Calu3 (cell line): ENCODE measurements at regions of chr6 and their contacts with region 1.

Region 1: DNA sequence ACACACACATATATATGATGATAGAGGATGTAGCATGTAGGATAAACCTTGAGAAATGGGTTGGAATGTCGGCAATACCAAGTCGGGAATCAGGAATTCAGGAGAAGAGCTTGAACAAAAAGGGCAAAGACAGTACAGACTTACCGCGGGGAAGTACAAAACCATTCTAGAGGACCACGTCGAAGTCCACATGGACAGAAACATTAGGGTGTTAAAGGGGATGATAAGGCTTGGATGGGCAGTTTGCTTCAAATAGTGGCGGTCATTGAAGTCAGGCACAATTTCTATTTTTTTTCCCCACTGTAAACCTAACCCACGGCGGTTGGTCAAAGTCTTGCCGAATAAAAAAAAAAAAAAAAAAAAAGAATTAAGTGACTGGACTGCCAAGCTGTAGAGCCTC is 766 bp upstream of the NUS1 start:
- DNase-seq: no peak
- H3K4me3 Mint-ChIP-seq: peak overlapping the region; percentile 84
- H3K27ac Mint-ChIP-seq: peak overlapping the region; percentile 36
- H3K4me1 Mint-ChIP-seq: peaks cover 36% of the 10 kb centered on the region
- H3K27me3 Mint-ChIP-seq: no peaks in the 10 kb centered on the region
- CTCF ChIP-seq: no peak

Region 2: GRCh38 chr6:117557951-117558350 is 116.6 kb before region 1 on chr6:
- CTCF ChIA-PET with region 1: no interaction called
- intact Hi-C with region 1: no loop called
- DNase-seq: no peak
- H3K4me3 Mint-ChIP-seq: no peak overlapping the region
- H3K27ac Mint-ChIP-seq: no peak overlapping the region
- H3K4me1 Mint-ChIP-seq: no peaks in the 10 kb centered on the region
- H3K27me3 Mint-ChIP-seq: no peaks in the 10 kb centered on the region
- CTCF ChIP-seq: no peak

Region 3: DNA sequence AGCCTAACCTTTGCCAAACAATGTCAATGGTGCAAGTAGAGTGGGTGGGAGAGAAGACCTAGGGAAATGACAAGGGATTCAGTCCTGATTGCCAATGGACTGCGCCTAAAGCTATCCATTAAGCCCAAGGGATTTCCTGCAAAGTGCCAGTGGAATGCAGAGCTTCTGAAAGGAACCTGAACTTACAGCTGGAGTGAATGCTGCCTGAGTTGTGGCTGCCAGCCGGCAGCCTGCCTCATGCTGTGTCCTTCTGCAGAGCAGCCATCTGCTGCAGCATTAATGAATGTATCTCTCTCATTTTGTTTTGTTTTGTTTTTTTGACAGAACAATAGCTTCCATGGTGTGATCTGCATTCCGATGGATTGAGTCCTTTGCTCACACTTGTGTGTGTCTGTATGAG is 277.3 kb after region 1 on chr6:
- CTCF ChIA-PET with region 1: interaction called, 11 read pairs
- intact Hi-C with region 1: no loop called
- DNase-seq: no peak
- H3K4me3 Mint-ChIP-seq: no peak overlapping the region
- H3K27ac Mint-ChIP-seq: no peak overlapping the region
- H3K4me1 Mint-ChIP-seq: no peaks in the 10 kb centered on the region
- H3K27me3 Mint-ChIP-seq: no peaks in the 10 kb centered on the region
- CTCF ChIP-seq: no peak